ENCODE measurements at regions of chr3 and their contacts with region 1.

Region 1: DNA sequence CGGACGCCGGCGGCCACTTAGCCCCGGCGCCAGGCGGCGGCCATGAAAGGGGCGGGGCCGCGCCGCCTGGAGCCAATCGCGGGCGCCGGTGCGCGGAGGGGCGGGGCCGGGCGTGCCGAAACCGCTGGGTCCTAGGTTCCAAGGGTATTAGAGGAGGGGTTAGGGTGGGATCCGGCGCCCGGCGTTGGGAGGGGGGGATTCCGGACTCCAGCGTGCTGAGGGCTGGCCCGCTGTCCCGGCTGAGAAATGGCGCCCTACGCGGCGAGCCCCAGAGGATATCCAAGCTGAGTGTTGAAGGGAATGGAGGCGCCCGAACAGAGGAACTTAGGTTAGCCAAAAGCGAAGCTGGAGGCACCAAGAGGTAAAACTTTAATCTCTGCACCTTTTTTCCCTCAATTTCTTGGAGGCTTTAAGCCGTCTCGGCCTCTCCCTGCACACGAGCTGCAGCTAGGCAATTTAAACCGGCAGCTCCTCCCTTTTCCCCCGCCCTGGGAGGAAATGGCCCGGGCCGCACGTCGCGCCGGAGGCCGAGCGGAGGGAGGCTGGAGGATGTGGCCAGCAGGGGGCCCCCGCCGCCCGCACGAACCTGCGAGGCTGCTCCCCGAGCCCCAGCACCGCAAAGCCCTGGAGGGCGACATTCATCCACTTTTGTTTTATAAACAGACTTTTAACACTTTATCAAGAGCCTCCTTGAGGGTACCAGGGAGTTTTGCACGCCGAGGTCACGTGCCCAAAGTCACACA is at the start of gene XXYLT1:
- DNase-seq: peak; percentile 91 to 93
- ATAC-seq: peak; percentile 95 to 98 (median 97)
- H3K4me3 ChIP-seq: peak within 1 kb of the TSS; percentile 70 to 98 (median 82)
- H3K27ac ChIP-seq: peak within 1 kb of the TSS; percentile 73 to 95 (median 92)
- H3K4me1 ChIP-seq: peaks cover 8 to 28% (median 23%) of the 10 kb centered on the region in 9 donors
- H3K27me3 ChIP-seq: no peaks in the 10 kb centered on the region
- CTCF ChIP-seq: peak; percentile 92 to 98 (median 96)
- total RNA-seq, gene XXYLT1: 2.2 to 7.2 (median 3.6) TPM

Region 2: DNA sequence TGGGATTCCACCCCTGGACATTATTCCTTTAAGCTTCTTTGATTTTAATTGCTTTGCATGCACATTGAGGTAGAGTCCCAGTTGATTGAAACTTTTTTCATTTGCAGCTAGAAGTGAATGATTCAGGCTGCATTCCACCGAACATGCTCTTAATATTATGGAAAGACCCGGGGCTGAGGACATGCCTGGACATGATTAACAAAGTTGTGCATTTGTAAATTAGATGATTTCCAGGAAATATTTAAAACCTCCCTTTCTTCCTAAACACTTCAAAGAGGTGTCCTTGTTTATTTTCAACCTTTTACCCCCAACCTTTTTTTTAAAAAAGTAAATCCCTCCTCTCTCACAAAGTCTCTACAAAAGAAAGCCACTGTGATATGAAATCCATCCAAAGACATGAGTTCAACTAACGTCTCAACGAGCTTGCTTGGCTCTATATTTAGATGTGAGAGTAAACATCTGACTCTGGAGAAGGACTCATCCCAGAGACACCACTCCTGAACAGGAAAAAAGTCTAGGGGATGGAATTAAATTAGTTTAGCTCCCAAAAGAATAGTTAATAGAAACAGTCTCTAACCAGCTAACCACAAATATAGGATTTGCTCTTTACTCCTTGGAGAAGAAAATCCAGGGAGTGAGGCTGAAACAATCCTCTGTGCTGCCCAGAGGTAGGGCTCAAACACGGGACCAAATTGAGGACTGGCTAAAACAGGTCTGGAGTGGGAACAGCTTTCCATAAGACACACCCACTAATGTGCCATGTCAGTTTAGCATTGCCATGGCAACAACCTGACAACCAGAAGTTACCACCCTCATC is 83.5 kb before region 1 on chr3:
- intact Hi-C with region 1: no loop called
- DNase-seq: no peak
- ATAC-seq: no peak
- H3K4me3 ChIP-seq: no peak overlapping the region
- H3K27ac ChIP-seq: peak overlapping the region in 3 of 10 donors; percentile 24 to 41 (median 39)
- H3K4me1 ChIP-seq: peaks cover 0 to 55% (median 43%) of the 10 kb centered on the region in 9 donors
- H3K27me3 ChIP-seq: no peaks in the 10 kb centered on the region
- CTCF ChIP-seq: no peak

Region 3: DNA sequence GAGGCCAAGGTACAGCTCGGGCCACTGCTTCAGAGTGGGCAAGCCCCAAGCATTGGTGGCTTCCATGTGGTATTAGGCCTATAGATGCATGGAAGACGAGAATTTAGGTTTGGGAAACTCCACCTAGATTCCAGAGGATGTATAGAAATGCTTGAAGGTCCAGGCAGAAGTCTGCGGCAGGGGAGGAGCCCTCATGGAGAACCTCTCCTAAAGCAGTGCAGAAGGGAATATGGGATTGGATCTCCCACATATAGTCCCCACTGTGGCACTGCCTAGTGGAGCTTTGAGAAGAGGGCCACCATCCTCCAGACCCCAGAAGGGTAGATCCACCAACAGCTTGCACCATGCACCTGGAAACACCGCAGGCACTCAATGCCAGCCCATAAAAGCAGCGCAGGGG is 47.8 kb after region 1 on chr3:
- intact Hi-C with region 1: no loop called
- DNase-seq: no peak
- ATAC-seq: no peak
- H3K4me3 ChIP-seq: no peak overlapping the region
- H3K27ac ChIP-seq: no peak overlapping the region
- H3K4me1 ChIP-seq: no peaks in the 10 kb centered on the region
- H3K27me3 ChIP-seq: no peaks in the 10 kb centered on the region
- CTCF ChIP-seq: no peak

Region 4: GRCh38 chr3:195522254-195523023 is 251.2 kb after region 1 on chr3:
- intact Hi-C with region 1: loop called (anchors 1 to 5 kb)
- DNase-seq: no peak
- ATAC-seq: no peak
- H3K4me3 ChIP-seq: no peak overlapping the region
- H3K27ac ChIP-seq: no peak overlapping the region
- H3K4me1 ChIP-seq: peaks cover 0 to 15% (median 5%) of the 10 kb centered on the region in 9 donors
- H3K27me3 ChIP-seq: no peaks in the 10 kb centered on the region
- CTCF ChIP-seq: peak; percentile 63 to 87 (median 78)